ENCODE measurements at regions of chr12 and their contacts with region 1.

Region 1: DNA sequence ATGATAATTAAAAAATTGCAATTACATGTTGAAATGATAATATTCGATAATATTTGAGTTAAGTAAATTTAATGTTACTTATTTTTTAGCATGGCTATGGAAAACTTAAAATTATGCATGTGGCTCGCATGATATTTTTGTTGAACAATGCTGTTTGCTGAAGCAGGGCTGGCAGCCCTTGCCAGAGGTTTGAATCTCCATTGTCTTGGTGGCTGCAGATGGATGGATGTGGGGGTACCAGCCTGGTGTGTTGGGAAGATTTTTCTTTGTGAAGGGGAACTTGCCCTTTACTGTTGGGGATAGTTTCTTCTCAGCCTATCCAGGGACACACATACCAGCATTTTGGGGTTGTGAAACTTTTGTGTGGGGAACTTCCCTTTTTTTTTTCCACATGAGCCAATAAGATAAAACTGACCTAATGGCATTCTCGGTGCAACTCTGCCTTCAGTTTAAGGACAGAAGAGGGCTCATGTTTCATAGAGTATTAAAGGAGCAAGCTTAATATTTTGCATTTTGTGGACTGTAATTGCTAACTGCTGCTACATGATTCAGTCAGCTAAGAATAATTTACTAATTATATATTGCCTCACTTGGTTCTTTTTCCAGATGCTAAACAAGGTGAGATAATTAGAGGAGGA is 8.8 kb downstream of the RASSF3 start:
- DNase-seq: no peak
- ATAC-seq: peak; percentile 22 to 70 (median 56)
- H3K4me3 ChIP-seq: no peak overlapping the region
- H3K27ac ChIP-seq: peak overlapping the region in 4 of 10 donors; percentile 23 to 71 (median 48)
- H3K4me1 ChIP-seq: peaks cover 6 to 93% (median 54%) of the 10 kb centered on the region in 9 donors
- H3K27me3 ChIP-seq: no peaks in the 10 kb centered on the region
- CTCF ChIP-seq: no peak

Region 2: GRCh38 chr12:64304571-64304970 is 314.5 kb before region 1 on chr12:
- intact Hi-C with region 1: no loop called
- DNase-seq: no peak
- ATAC-seq: no peak
- H3K4me3 ChIP-seq: no peak overlapping the region
- H3K27ac ChIP-seq: no peak overlapping the region
- H3K4me1 ChIP-seq: no peaks in the 10 kb centered on the region
- H3K27me3 ChIP-seq: no peaks in the 10 kb centered on the region
- CTCF ChIP-seq: no peak

Region 3: DNA sequence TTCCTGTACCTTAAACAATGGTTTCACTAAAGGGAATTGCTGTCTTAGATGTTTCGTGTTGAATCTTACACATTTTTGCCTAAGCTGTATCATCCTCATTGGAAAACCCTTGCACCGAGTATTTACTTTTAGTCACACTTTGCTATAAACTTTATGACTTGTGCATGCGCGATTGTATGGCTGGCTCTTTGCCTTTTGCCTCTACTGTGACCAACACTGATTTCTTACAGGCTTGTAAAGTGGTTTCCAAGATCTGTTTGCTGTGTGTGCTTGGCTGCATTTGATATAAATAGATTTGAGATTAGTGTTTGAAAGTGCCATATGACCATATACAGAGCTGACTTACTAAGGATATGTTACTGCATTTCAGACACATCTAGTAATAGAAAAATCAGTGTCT is 31.7 kb after region 1 on chr12:
- intact Hi-C with region 1: loop called in 1 of 10 experiments (anchors 5 kb)
- DNase-seq: no peak
- ATAC-seq: peak in 7 of 8 donors; percentile 27 to 72 (median 59)
- H3K4me3 ChIP-seq: peak overlapping the region in 1 of 10 donors; percentile 6
- H3K27ac ChIP-seq: peak overlapping the region in 9 of 10 donors; percentile 11 to 73 (median 51)
- H3K4me1 ChIP-seq: peaks cover 6 to 65% (median 34%) of the 10 kb centered on the region in 9 donors
- H3K27me3 ChIP-seq: no peaks in the 10 kb centered on the region
- CTCF ChIP-seq: no peak

Measured in heart right ventricle (tissue), 16 donors.